CD4-positive, alpha-beta T cell (primary cell): ENCODE measurements at regions of chr17 and their contacts with region 1.

Region 1: DNA sequence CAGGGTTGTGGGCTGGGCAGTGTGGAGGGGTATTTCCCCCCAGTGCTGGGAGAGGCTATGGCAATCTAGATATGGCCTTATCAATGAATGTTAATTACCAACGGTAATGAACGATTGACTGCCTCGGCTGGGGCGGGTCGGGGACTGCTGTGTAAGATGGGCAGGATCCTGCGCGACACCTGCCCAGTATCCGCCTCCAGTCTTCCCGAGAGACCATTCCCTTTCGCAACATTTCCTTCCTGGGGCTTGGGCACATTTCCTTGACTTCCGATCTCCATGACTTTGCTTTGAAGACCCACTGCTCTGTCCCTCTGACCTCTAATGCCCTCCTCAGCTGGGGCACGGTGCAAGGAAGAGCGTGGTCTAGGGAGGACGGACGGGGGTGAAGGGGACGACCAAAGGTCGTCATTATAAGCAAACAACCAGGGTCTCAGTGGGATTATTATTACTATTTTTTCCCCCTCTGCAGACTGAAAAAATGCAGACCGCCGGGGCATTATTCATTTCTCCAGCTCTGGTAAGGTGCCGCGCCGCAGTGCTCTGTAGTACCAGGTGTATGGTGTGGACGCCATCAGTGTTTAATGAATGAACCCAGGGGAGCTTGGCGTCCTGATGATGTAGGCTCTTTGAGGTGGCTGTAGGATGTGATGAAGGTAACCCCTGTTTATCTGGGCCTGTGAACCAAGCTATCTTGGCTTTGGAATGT is 506 bp downstream of the ATP5MC1 start:
- DNase-seq: peak in 2 of 14 experiments; percentile 43 to 49
- ATAC-seq: no peak
- H3K4me3 ChIP-seq: peak overlapping the region; percentile 74
- H3K4me3 Mint-ChIP-seq: peak overlapping the region; percentile 90
- H3K27ac ChIP-seq: peak overlapping the region; percentile 80 to 86
- H3K27ac Mint-ChIP-seq: peak overlapping the region; percentile 91
- H3K4me1 ChIP-seq: peaks cover 25% of the 10 kb centered on the region
- H3K4me1 Mint-ChIP-seq: peaks cover 22% of the 10 kb centered on the region
- H3K27me3 ChIP-seq: no peaks in the 10 kb centered on the region
- H3K27me3 Mint-ChIP-seq: no peaks in the 10 kb centered on the region
- CTCF ChIP-seq: no peak

Region 2: DNA sequence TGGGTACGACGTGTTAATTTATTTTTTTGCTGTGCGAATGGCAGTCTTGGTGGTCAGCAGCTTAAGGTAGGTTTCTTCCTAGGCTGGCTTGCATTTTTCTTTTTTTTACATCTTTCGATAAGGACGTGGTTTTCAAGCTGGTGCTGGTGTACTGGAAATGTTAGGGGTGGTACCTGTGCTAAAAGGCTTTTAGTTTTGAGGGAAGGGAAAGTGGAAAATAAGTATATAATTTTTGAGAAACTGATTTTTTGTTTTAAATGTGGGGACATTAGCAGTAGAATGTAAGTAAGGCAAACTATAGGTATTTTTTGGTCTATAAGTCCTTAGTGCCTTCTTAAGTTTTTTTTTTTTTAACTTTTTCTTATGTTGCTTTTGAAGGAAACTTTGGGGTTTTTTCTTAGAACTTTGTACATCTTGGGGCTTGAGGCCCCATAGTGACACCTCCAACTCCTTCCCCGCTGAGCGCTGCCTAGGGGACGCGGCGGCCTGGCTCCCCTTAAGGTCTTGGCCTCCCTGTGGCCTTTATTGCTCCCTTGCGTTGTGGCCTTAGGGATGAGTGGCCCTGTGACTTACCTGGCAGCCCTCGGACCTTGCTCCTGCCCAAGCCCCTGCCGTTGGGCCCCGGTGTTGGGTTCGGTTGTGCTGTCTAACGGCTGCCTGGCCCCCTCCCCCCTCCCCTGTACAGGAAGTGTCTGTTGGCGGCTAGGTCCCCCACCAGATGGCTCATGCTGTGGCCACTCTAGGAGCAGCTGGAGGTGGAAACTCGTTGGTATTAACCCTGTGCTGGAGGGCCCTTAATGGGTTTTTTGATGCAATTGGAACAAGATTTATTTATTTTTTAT is 1826.0 kb before region 1 on chr17:
- CTCF ChIA-PET with region 1: no interaction called
- POLR2A ChIA-PET with region 1: no interaction called
- intact Hi-C with region 1: loop called in 1 of 2 experiments (anchors 10 kb)
- DNase-seq: peak; percentile 54 to 92 (median 71)
- ATAC-seq: peak; percentile 97
- H3K4me3 ChIP-seq: peak overlapping the region; percentile 62
- H3K4me3 Mint-ChIP-seq: peak overlapping the region; percentile 95
- H3K27ac ChIP-seq: peak overlapping the region; percentile 71 to 72
- H3K27ac Mint-ChIP-seq: peak overlapping the region; percentile 94
- H3K4me1 ChIP-seq: peaks cover 13% of the 10 kb centered on the region
- H3K4me1 Mint-ChIP-seq: peaks cover 37% of the 10 kb centered on the region
- H3K27me3 ChIP-seq: no peaks in the 10 kb centered on the region
- H3K27me3 Mint-ChIP-seq: no peaks in the 10 kb centered on the region
- CTCF ChIP-seq: no peak

Region 3: DNA sequence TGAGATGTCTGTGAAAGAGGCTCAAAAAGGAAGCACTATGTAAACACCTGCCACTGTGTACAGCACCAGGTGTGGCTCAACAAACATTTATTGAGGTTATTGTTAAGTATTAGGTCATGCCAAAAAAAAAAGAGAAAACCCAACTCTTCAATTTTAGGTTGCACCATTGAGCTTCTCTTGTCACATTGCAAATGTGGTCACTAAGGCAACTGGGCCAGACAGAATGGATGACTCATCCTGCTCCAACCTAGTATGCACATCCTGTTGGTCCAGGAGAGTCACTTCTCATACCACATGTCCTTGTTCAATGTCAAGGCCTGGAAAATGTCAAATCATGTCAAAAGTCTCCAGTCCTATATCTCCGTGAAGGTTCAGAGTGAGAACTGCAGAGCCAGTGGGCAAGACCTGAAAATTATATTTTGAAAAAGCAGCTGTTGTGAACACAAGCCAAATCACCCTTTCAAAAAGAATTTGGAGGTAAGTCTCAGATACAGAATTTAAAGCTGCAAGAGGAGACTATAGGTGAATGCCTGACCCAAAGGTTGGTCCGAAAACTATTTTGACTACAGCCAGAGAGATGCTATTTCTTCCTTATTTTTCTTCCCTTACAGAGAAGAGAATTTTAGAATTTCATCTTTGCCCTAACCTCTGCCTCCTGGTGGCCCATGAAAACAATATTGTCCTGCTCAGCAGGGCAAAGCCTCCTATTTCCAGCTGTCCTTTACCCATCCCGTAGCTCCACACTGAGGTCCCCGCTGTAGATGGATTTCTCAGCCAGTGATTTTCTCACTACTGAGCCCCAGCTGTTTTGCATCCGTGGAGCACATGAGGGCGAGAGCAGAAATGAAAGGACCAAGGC is 387.1 kb before region 1 on chr17:
- CTCF ChIA-PET with region 1: no interaction called
- POLR2A ChIA-PET with region 1: no interaction called
- intact Hi-C with region 1: no loop called
- DNase-seq: peak in 11 of 14 experiments; percentile 15 to 83 (median 39)
- ATAC-seq: peak; percentile 94
- H3K4me3 ChIP-seq: no peak overlapping the region
- H3K4me3 Mint-ChIP-seq: no peak overlapping the region
- H3K27ac ChIP-seq: no peak overlapping the region
- H3K27ac Mint-ChIP-seq: peak overlapping the region; percentile 22
- H3K4me1 ChIP-seq: no peaks in the 10 kb centered on the region
- H3K4me1 Mint-ChIP-seq: peaks cover 4% of the 10 kb centered on the region
- H3K27me3 ChIP-seq: no peaks in the 10 kb centered on the region
- H3K27me3 Mint-ChIP-seq: peaks cover 39% of the 10 kb centered on the region
- CTCF ChIP-seq: no peak

Region 4: GRCh38 chr17:48830840-48831548 is 62.1 kb before region 1 on chr17 and contains the start of gene CALCOCO2:
- CTCF ChIA-PET with region 1: no interaction called
- POLR2A ChIA-PET with region 1: interaction called, 4 read pairs
- intact Hi-C with region 1: loop called in 1 of 2 experiments (anchors 5 kb)
- DNase-seq: peak; percentile 66 to 95 (median 84)
- ATAC-seq: peak; percentile 84
- H3K4me3 ChIP-seq: peak within 1 kb of the TSS; percentile 98
- H3K4me3 Mint-ChIP-seq: peak within 1 kb of the TSS; percentile 99
- H3K27ac ChIP-seq: peak within 1 kb of the TSS; percentile 90 to 96
- H3K27ac Mint-ChIP-seq: peak within 1 kb of the TSS; percentile 97
- H3K4me1 ChIP-seq: peaks cover 45% of the 10 kb centered on the region
- H3K4me1 Mint-ChIP-seq: peaks cover 51% of the 10 kb centered on the region
- H3K27me3 ChIP-seq: no peaks in the 10 kb centered on the region
- H3K27me3 Mint-ChIP-seq: peaks cover under 1% of the 10 kb centered on the region
- CTCF ChIP-seq: no peak
- total RNA-seq, gene CALCOCO2: 140 to 142 TPM

Region 5: GRCh38 chr17:48908047-48908843 is 15.2 kb after region 1 on chr17 and contains the start of gene UBE2Z:
- CTCF ChIA-PET with region 1: interaction called, 4 read pairs
- POLR2A ChIA-PET with region 1: interaction called, 112 read pairs
- intact Hi-C with region 1: loop called (anchors 1 kb)
- DNase-seq: peak; percentile 81 to 97 (median 90)
- ATAC-seq: peak; percentile 88
- H3K4me3 ChIP-seq: peak within 1 kb of the TSS; percentile 59
- H3K4me3 Mint-ChIP-seq: peak within 1 kb of the TSS; percentile 95
- H3K27ac ChIP-seq: peak within 1 kb of the TSS; percentile 83 to 86
- H3K27ac Mint-ChIP-seq: peak within 1 kb of the TSS; percentile 99
- H3K4me1 ChIP-seq: peaks cover 36% of the 10 kb centered on the region
- H3K4me1 Mint-ChIP-seq: peaks cover 53% of the 10 kb centered on the region
- H3K27me3 ChIP-seq: no peaks in the 10 kb centered on the region
- H3K27me3 Mint-ChIP-seq: no peaks in the 10 kb centered on the region
- CTCF ChIP-seq: no peak
- total RNA-seq, gene UBE2Z: 60.5 to 61.6 TPM

Region 6: DNA sequence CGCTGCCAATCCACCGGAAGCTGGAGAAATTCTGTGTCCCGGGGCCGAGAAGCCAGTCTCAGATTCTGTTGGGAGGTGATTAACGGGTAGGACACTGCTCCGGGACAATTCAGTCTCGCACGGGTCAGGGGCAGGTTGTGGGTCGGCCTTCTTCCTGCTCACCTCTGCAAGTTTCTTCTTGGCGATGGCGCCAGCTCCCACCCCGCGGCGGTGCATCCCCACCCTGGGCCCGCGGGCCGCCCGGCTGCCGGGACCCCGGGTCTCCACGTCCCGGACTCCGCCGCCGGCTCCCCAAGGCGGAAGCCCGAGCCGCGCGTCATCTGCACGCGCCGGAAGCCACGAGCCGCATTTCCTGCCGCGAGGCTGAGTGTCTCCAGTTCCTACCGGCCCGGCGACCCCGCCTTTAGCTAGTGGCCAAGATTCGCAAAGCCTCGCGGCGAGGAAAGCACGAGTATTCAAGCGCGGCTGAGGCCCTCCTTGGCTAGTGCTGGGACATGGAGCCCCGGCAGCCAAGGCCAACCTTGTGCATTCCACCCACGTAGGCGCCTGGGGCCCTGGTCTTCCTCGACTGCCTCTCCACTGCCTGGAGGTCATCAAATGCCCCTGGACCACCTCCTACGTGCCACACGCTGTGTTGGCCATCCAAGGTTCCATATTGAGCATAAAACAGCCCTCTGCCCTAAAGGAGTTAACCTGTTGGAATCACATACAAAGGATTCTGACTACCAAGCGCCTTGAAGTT is 51.6 kb after region 1 on chr17 and contains the start of gene SNF8:
- CTCF ChIA-PET with region 1: interaction called, 3 read pairs
- POLR2A ChIA-PET with region 1: interaction called, 20 read pairs
- intact Hi-C with region 1: loop called in 1 of 2 experiments (anchors 1 kb)
- DNase-seq: peak; percentile 81 to 94 (median 90)
- ATAC-seq: peak; percentile 93
- H3K4me3 ChIP-seq: peak within 1 kb of the TSS; percentile 99
- H3K4me3 Mint-ChIP-seq: peak within 1 kb of the TSS; percentile 99
- H3K27ac ChIP-seq: peak within 1 kb of the TSS; percentile 81 to 85
- H3K27ac Mint-ChIP-seq: peak within 1 kb of the TSS; percentile 95
- H3K4me1 ChIP-seq: peaks cover 31% of the 10 kb centered on the region
- H3K4me1 Mint-ChIP-seq: peaks cover 14% of the 10 kb centered on the region
- H3K27me3 ChIP-seq: no peaks in the 10 kb centered on the region
- H3K27me3 Mint-ChIP-seq: no peaks in the 10 kb centered on the region
- CTCF ChIP-seq: no peak
- total RNA-seq, gene SNF8: 53.8 to 57.4 TPM